BJ (cell line): ENCODE measurements at regions of chr7 and their contacts with region 1.

Region 1: DNA sequence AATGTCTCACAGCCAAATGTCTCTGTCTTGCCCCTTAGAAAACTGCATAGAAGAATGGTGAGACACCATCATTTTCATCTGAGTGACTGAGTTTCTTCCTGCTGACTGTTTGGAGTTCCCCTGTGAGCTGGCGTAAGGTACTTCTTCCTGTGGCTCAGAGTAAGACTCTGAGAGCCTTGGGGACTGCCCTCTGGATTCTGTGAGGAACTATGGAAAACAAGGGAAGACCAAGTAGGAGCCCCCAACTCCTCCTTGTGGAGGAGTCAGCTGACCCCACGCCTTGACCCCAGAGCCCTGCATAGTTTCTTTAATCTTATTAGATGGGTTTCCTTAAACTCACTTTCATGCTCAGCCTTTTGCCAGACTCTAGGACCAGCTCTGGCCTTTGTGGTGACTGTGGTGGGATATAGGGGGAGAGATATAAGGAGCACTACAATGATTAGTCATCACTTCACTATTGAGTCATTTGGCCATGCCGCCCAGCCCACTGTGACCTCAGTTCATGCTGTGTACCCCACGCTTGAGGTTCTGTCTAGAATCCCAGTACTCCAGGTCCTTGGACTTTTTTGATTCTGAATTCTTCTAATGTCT is 51.8 kb upstream of the FAM133B start:
- DNase-seq: no peak
- H3K4me3 ChIP-seq: no peak overlapping the region
- H3K27me3 ChIP-seq: no peaks in the 10 kb centered on the region
- CTCF ChIP-seq: no peak

Region 2: DNA sequence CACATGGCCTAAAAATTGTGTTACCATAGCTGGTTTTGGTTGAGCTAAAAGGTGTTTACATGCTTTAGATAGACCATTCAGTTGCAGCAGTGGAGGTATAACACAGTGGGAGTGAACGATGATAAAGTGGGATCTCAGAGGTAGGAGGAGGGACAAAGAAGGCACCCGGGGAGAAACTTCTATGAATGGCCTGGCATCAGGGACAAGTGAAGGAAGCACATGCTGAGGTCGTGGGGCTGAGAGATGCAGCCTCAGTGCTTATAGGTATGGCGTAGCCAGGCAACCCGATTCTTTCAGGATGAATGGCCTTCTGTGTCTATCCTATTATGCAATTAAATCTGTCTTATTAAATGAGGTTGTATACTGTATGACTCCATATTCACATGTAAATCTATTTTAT is 198.3 kb after region 1 on chr7:
- CTCF ChIA-PET with region 1: no interaction called
- POLR2A ChIA-PET with region 1: interaction called, 10 read pairs
- DNase-seq: no peak
- H3K4me3 ChIP-seq: no peak overlapping the region
- H3K27me3 ChIP-seq: no peaks in the 10 kb centered on the region
- CTCF ChIP-seq: no peak